ENCODE measurements at regions of chr13 and their contacts with region 1.

Region 1: DNA sequence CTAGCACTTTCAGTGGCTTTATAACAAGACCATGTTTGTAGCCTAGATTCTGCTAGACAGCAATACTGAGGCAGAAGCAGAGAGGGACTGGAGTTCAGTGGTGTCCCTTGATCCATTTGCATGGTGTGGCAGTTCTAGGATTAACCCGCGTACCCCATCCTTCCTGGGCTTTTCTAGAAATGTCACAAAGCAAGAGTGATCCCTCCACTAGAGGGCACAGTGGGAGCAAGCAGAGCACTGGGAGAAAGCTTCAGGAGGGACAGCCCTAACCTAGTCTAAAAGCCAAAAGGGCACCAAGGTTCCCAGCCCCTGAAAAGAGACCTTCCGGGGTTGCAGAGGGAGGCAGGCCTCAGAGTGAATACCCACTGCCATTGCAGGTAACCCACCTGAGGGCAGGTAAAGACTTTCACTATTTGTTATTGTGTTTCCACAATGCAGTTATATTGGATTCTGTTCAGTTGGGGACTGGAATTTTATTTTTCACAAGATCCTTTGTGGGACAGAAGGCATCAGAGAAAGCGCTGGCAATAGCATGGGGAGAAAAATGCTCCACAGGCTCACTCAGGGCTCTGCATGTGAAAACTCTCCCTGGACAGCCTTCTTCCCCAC is 170.6 kb downstream of the FLT1 start:
- DNase-seq: no peak
- H3K4me3 ChIP-seq: no peak overlapping the region
- H3K27me3 ChIP-seq: no peaks in the 10 kb centered on the region
- CTCF ChIP-seq: peak; percentile 87

Region 2: GRCh38 chr13:28306325-28306724 is 18.0 kb before region 1 on chr13:
- CTCF ChIA-PET with region 1: no interaction called
- POLR2A ChIA-PET with region 1: no interaction called
- DNase-seq: no peak
- H3K4me3 ChIP-seq: no peak overlapping the region
- H3K27me3 ChIP-seq: no peaks in the 10 kb centered on the region
- CTCF ChIP-seq: no peak

Region 3: DNA sequence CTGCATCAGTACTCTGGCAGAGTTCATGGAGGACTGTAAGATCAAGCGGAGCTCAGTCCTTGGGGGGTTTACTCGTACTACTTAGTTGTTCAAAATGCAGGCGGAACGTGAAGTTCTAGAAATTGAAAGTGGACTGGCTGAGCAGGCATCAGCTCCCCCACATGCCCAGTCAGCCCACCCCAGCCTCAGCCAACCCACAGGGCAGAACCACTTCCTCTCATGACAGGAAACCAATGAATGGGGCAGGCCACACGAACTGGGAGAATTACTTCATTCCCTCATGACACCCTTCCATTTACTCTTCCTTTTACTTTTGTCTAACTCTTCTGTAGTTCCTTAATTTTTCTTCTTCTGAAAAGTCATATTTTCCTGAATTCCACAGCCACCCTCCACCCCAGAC is 98.7 kb after region 1 on chr13:
- CTCF ChIA-PET with region 1: no interaction called
- POLR2A ChIA-PET with region 1: no interaction called
- DNase-seq: no peak
- H3K4me3 ChIP-seq: no peak overlapping the region
- H3K27me3 ChIP-seq: no peaks in the 10 kb centered on the region
- CTCF ChIP-seq: no peak

Region 4: GRCh38 chr13:28493740-28494503 is 169.6 kb after region 1 on chr13:
- CTCF ChIA-PET with region 1: interaction called, 10 read pairs
- POLR2A ChIA-PET with region 1: no interaction called
- DNase-seq: no peak
- H3K4me3 ChIP-seq: peak overlapping the region; percentile 93
- H3K27me3 ChIP-seq: no peaks in the 10 kb centered on the region
- CTCF ChIP-seq: no peak

Region 5: DNA sequence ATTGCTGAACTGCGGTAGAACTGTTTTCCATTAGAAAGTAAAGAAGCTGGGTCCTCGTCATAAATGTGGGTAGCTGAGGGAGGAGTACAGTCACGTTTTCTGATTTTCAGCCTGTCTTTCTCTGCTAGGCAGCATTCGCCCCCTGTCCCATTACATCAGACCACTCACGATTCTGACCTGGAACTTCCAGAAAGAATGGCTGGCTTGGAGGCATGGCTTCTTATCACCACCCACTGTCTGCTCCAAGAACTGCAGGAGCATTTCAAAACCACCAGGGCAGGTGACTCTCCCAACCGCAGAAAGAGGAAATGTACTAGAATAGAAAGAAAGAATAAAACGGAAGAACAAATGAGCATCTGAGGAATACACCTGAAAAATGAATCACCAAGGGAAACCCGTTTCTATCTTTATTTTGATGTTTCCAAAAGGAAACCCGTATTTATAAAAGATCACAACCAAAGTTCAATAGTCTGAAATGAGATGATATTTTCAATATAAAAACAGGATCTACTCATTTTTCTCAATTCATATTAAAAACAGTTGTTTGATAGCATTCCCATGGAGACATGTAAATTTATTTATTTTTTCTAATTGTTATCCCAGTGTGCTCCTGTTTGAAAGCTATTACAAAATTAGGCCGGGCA is 312.5 kb after region 1 on chr13:
- CTCF ChIA-PET with region 1: interaction called, 24 read pairs
- POLR2A ChIA-PET with region 1: no interaction called
- DNase-seq: no peak
- H3K4me3 ChIP-seq: no peak overlapping the region
- H3K27me3 ChIP-seq: no peaks in the 10 kb centered on the region
- CTCF ChIP-seq: peak; percentile 94

Region 6: GRCh38 chr13:28655561-28655960 is 331.3 kb after region 1 on chr13:
- CTCF ChIA-PET with region 1: interaction called, 14 read pairs
- POLR2A ChIA-PET with region 1: no interaction called
- DNase-seq: peak; percentile 47
- H3K4me3 ChIP-seq: no peak overlapping the region
- H3K27me3 ChIP-seq: no peaks in the 10 kb centered on the region
- CTCF ChIP-seq: no peak